HCT116 (cell line): ENCODE measurements at regions of chr19 and their contacts with region 1.

Region 1: GRCh38 chr19:41263850-41264580 is at the start of gene HNRNPUL1:
- DNase-seq: peak; percentile 100
- ATAC-seq: peak; percentile 71
- H3K4me3 ChIP-seq: peak within 1 kb of the TSS; percentile 92 to 94
- H3K27ac ChIP-seq: peak within 1 kb of the TSS; percentile 100
- H3K4me1 ChIP-seq: peaks cover 3 to 21% of the 10 kb centered on the region in 2 experiments; a peak in 3 of 4 replicates
- H3K27me3 ChIP-seq: no peaks in the 10 kb centered on the region
- CTCF ChIP-seq: peak in 2 of 3 experiments; percentile 8 to 22; a peak in 2 of 6 replicates
- POLR2A ChIP-seq: no peak
- RAD21 ChIP-seq: no peak
- total RNA-seq, gene HNRNPUL1: 201 TPM

Region 2: DNA sequence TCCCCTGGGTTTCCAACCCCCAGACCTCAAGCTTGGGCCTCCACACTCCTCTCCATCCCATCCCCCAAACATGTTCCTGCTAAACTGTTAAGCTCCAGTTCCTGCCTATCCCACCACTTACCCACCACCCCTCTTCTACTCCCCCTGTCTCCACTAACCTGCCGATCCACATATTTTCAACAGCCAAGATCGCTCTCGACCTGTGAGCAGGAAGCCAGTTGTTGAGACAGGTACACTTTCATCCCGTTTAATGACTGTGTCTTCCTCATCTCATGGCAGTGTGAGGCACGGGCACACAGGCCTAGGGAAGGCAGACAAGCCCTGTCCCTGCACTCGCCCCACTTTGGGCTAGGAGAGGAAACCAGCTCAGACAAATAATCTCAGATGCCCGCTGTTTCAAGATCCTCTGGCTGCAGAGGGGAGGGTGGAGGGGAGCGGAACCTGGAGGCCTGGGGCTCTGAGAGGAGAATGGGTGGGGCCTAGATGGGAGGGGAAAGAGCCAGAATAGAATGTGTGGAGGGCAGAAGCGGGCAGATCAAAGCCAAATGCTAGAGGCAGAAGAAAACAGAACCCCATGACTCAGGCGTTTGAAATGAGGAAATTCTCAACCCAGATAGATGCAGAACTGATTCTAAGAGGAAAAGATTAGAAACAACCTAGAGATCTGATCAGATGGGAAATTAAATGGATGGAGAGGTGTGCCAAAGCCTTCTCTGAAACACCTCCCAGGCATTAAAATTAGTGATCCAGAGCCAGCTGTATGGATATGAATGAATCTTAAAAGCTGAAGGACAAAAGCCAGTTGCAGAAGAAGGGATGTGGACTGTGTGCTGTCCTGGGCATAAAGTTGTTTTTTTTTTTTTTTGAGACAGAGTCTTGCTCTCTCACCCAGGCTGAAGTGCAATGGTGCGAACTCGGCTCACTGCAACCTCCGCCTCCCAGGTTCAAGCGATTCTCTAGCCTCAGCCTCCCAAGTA is 87.9 kb before region 1 on chr19:
- CTCF ChIA-PET with region 1: no interaction called
- POLR2A ChIA-PET with region 1: no interaction called
- RAD21 ChIA-PET with region 1: no interaction called
- intact Hi-C with region 1: no loop called
- DNase-seq: peak; percentile 92
- ATAC-seq: peak; percentile 95
- H3K4me3 ChIP-seq: peak overlapping the region; percentile 40 to 65
- H3K27ac ChIP-seq: peak overlapping the region; percentile 72
- H3K4me1 ChIP-seq: peaks cover 25 to 58% of the 10 kb centered on the region in 2 experiments
- H3K27me3 ChIP-seq: no peaks in the 10 kb centered on the region
- CTCF ChIP-seq: no peak
- POLR2A ChIP-seq: no peak
- RAD21 ChIP-seq: peak; percentile 24; the same call in 1 of the 2 replicates

Region 3: GRCh38 chr19:41206926-41207750 is 56.9 kb before region 1 on chr19:
- CTCF ChIA-PET with region 1: interaction called, 70 read pairs
- POLR2A ChIA-PET with region 1: interaction called, 22 read pairs
- RAD21 ChIA-PET with region 1: interaction called, 9 to 22 read pairs
- intact Hi-C with region 1: loop called (anchors 1 kb)
- DNase-seq: no peak
- ATAC-seq: no peak
- H3K4me3 ChIP-seq: no peak overlapping the region
- H3K27ac ChIP-seq: no peak overlapping the region
- H3K4me1 ChIP-seq: 0 out of 4 replicates have a peak, but pooled peaks cover 0 to 3% of the 10 kb centered on the region in 2 experiments
- H3K27me3 ChIP-seq: no peaks in the 10 kb centered on the region
- CTCF ChIP-seq: no peak
- POLR2A ChIP-seq: no peak
- RAD21 ChIP-seq: no peak

Region 4: GRCh38 chr19:41218615-41219507 is 45.2 kb before region 1 on chr19 and contains the start of gene AXL:
- CTCF ChIA-PET with region 1: interaction called, 7 read pairs
- POLR2A ChIA-PET with region 1: interaction called, 14 read pairs
- RAD21 ChIA-PET with region 1: interaction called in 1 of 2 experiments, 3 read pairs
- intact Hi-C with region 1: no loop called
- DNase-seq: peak; percentile 38
- ATAC-seq: peak; percentile 72
- H3K4me3 ChIP-seq: peak within 1 kb of the TSS; percentile 64 to 93
- H3K27ac ChIP-seq: peak within 1 kb of the TSS; percentile 86
- H3K4me1 ChIP-seq: peaks cover 28 to 71% of the 10 kb centered on the region in 2 experiments
- H3K27me3 ChIP-seq: no peaks in the 10 kb centered on the region
- CTCF ChIP-seq: no peak
- POLR2A ChIP-seq: no peak
- RAD21 ChIP-seq: no peak
- total RNA-seq, gene AXL: 47.4 TPM

Region 5: GRCh38 chr19:41226053-41226873 is 37.8 kb before region 1 on chr19:
- CTCF ChIA-PET with region 1: interaction called, 7 read pairs
- POLR2A ChIA-PET with region 1: interaction called, 12 read pairs
- RAD21 ChIA-PET with region 1: interaction called in 1 of 2 experiments, 3 read pairs
- intact Hi-C with region 1: loop called (anchors 5 kb)
- DNase-seq: peak; percentile 72
- ATAC-seq: peak; percentile 68
- H3K4me3 ChIP-seq: peak overlapping the region; percentile 33 to 50
- H3K27ac ChIP-seq: peak overlapping the region; percentile 98
- H3K4me1 ChIP-seq: peaks cover 68 to 93% of the 10 kb centered on the region in 2 experiments
- H3K27me3 ChIP-seq: no peaks in the 10 kb centered on the region
- CTCF ChIP-seq: no peak
- POLR2A ChIP-seq: no peak
- RAD21 ChIP-seq: no peak

Region 6: DNA sequence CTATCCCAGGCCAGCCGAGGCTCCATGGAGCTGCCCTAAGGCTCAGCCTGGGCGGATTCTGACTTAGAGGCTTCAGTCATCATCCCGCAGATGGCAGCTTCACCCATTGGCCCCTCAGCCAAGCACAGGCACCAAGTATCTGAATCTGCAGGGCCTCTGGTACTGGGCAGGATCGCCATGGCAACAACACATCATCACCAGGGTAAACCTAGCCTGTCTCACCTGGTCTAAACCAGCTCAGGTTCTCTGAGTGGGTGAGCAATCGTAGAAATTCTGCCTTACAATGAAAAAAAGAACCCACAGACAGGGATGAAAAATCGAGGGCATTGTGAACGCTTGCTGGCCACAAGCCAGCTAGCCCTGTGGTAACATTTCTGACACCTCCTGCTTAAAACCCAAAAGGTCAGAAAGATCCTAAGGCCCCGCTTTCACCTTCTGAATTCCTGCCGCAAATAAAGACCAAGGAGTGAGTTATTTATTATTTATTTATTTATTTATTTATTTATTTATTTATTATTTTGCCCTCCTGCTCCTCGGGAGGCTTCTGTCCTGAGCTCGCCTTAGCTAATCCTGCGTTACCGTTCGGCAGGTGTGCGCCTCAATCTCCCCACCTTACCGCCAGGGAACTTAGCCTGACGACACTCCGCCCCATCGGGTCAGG is 300.0 kb after region 1 on chr19:
- CTCF ChIA-PET with region 1: interaction called, 7 read pairs
- POLR2A ChIA-PET with region 1: interaction called, 3 read pairs
- RAD21 ChIA-PET with region 1: no interaction called
- intact Hi-C with region 1: loop called (anchors 5 kb)
- DNase-seq: no peak
- ATAC-seq: no peak; the same call in 1 of the 2 replicates
- H3K4me3 ChIP-seq: no peak overlapping the region
- H3K27ac ChIP-seq: no peak overlapping the region
- H3K4me1 ChIP-seq: peaks cover 2 to 7% of the 10 kb centered on the region in 2 experiments; a peak in 1 of 4 replicates
- H3K27me3 ChIP-seq: peaks cover 44% of the 10 kb centered on the region
- CTCF ChIP-seq: no peak
- POLR2A ChIP-seq: no peak
- RAD21 ChIP-seq: no peak